Naive thymus-derived CD4-positive, alpha-beta T cell (primary cell): ENCODE measurements at regions of chr6 and their contacts with region 1.

Region 1: DNA sequence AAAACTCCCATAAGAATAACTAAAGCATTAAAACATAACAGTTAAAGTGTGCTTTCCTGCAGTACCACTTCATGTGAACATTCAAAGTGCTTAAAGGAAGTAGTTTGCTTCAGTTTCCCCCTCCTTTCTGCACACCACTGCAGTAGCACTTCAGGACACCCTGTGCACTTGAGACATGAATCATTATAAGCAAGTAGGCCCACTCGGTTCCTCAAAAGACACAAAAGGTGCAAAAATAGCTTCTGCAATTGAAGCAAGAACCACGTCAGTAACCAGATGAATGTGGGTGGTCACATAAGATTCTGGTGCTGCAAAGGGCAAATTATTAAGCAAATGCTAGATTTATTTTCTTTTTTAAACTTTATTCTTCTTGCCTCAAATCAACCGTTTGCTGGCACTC is 160.6 kb downstream of the HIVEP2 start:
- DNase-seq: peak in 6 of 9 donors; percentile 8 to 30 (median 23)
- ATAC-seq: peak; percentile 61
- H3K4me3 ChIP-seq: no peak overlapping the region
- H3K4me3 Mint-ChIP-seq: peak overlapping the region in 8 of 10 donors; percentile 0 to 53 (median 36)
- H3K27ac ChIP-seq: peak overlapping the region; percentile 54
- H3K27ac Mint-ChIP-seq: peak overlapping the region in 8 of 9 donors; percentile 17 to 86 (median 55)
- H3K4me1 ChIP-seq: peaks cover 0 to 17% of the 10 kb centered on the region in 2 donors
- H3K4me1 Mint-ChIP-seq: peaks cover 21 to 83% (median 79%) of the 10 kb centered on the region in 7 donors
- H3K27me3 ChIP-seq: no peaks in the 10 kb centered on the region
- H3K27me3 Mint-ChIP-seq: no peaks in the 10 kb centered on the region

Region 2: DNA sequence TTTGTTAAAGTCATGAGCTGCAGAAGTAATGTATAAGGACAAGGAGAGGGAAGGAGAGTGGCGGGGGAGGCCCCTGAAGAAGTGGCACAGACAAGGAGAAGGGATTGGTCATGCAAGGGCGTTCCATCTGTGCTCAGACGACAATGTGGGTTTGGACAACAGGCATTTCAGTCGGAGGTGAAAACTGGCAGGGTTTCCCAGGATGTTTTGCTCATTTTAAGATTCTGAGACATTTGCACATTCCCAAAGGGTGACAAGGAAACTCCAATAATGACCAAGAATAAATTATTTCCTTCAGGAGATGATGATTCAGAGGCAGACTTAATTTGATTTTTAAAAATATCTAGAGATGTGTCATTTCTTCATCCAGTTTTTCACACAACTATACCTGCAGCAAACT is 21.1 kb before region 1 on chr6:
- CTCF ChIA-PET with region 1: interaction called, 3 read pairs
- POLR2A ChIA-PET with region 1: interaction called, 3 read pairs
- intact Hi-C with region 1: loop called in 1 of 2 experiments (anchors 2 kb)
- DNase-seq: no peak
- ATAC-seq: no peak
- H3K4me3 ChIP-seq: no peak overlapping the region
- H3K4me3 Mint-ChIP-seq: no peak overlapping the region
- H3K27ac ChIP-seq: peak overlapping the region; percentile 23
- H3K27ac Mint-ChIP-seq: peak overlapping the region in 7 of 9 donors; percentile 58 to 87 (median 75)
- H3K4me1 ChIP-seq: peaks cover 4 to 6% of the 10 kb centered on the region in 2 donors
- H3K4me1 Mint-ChIP-seq: peaks cover 4 to 69% (median 51%) of the 10 kb centered on the region in 7 donors
- H3K27me3 ChIP-seq: no peaks in the 10 kb centered on the region
- H3K27me3 Mint-ChIP-seq: no peaks in the 10 kb centered on the region

Region 3: GRCh38 chr6:142773859-142774648 is 10.3 kb before region 1 on chr6:
- CTCF ChIA-PET with region 1: no interaction called
- POLR2A ChIA-PET with region 1: no interaction called
- intact Hi-C with region 1: loop called in 1 of 2 experiments (anchors 2 kb)
- DNase-seq: peak in 3 of 9 donors; percentile 17 to 28 (median 23)
- ATAC-seq: peak; percentile 50
- H3K4me3 ChIP-seq: no peak overlapping the region
- H3K4me3 Mint-ChIP-seq: peak overlapping the region; percentile 23 to 61 (median 49)
- H3K27ac ChIP-seq: peak overlapping the region; percentile 18
- H3K27ac Mint-ChIP-seq: peak overlapping the region; percentile 52 to 94 (median 80)
- H3K4me1 ChIP-seq: peaks cover 10 to 17% of the 10 kb centered on the region in 2 donors
- H3K4me1 Mint-ChIP-seq: peaks cover 14 to 75% (median 43%) of the 10 kb centered on the region in 7 donors
- H3K27me3 ChIP-seq: no peaks in the 10 kb centered on the region
- H3K27me3 Mint-ChIP-seq: no peaks in the 10 kb centered on the region

Region 4: DNA sequence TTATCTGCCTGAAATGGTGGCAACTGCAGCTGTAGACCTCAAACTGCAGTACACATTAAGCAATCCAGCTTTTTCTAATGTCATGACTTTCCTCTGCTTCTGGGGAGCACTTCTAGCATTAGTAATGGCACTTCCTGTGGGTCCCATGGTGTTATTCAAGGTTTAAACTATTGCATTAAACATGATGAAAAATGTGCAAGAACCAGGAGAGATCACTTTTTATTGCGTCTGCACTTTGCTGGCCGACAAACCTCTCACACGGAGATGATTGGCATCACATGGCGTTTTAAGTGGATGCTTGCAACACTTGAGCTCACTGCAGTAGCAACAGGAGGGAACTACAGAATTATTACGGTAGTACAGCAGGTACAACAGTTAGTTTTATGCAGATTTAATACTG is 12.2 kb after region 1 on chr6:
- CTCF ChIA-PET with region 1: no interaction called
- POLR2A ChIA-PET with region 1: interaction called, 3 read pairs
- intact Hi-C with region 1: loop called in 1 of 2 experiments (anchors 1 kb)
- DNase-seq: no peak
- ATAC-seq: peak; percentile 52
- H3K4me3 ChIP-seq: no peak overlapping the region
- H3K4me3 Mint-ChIP-seq: peak overlapping the region in 3 of 10 donors; percentile 1 to 30 (median 21)
- H3K27ac ChIP-seq: no peak overlapping the region
- H3K27ac Mint-ChIP-seq: peak overlapping the region in 8 of 9 donors; percentile 1 to 78 (median 54)
- H3K4me1 ChIP-seq: peaks cover 0 to 28% of the 10 kb centered on the region in 2 donors
- H3K4me1 Mint-ChIP-seq: peaks cover 24 to 90% (median 83%) of the 10 kb centered on the region in 7 donors
- H3K27me3 ChIP-seq: no peaks in the 10 kb centered on the region
- H3K27me3 Mint-ChIP-seq: no peaks in the 10 kb centered on the region

Region 5: GRCh38 chr6:142802124-142802523 is 17.8 kb after region 1 on chr6:
- CTCF ChIA-PET with region 1: interaction called, 3 read pairs
- POLR2A ChIA-PET with region 1: interaction called, 3 read pairs
- intact Hi-C with region 1: loop called in 1 of 2 experiments (anchors 2 kb)
- DNase-seq: peak in 1 of 9 donors; percentile 44
- ATAC-seq: no peak
- H3K4me3 ChIP-seq: no peak overlapping the region
- H3K4me3 Mint-ChIP-seq: peak overlapping the region in 2 of 10 donors; percentile 2 to 3
- H3K27ac ChIP-seq: no peak overlapping the region
- H3K27ac Mint-ChIP-seq: peak overlapping the region in 8 of 9 donors; percentile 8 to 82 (median 62)
- H3K4me1 ChIP-seq: peaks cover 0 to 45% of the 10 kb centered on the region in 2 donors
- H3K4me1 Mint-ChIP-seq: peaks cover 38 to 99% (median 95%) of the 10 kb centered on the region in 7 donors
- H3K27me3 ChIP-seq: no peaks in the 10 kb centered on the region
- H3K27me3 Mint-ChIP-seq: no peaks in the 10 kb centered on the region

Region 6: GRCh38 chr6:142810952-142811514 is 26.7 kb after region 1 on chr6:
- CTCF ChIA-PET with region 1: interaction called, 3 read pairs
- POLR2A ChIA-PET with region 1: no interaction called
- intact Hi-C with region 1: loop called in 1 of 2 experiments (anchors 5 kb)
- DNase-seq: peak in 4 of 9 donors; percentile 25 to 40 (median 32)
- ATAC-seq: peak; percentile 62
- H3K4me3 ChIP-seq: no peak overlapping the region
- H3K4me3 Mint-ChIP-seq: peak overlapping the region; percentile 39 to 72 (median 62)
- H3K27ac ChIP-seq: peak overlapping the region; percentile 17
- H3K27ac Mint-ChIP-seq: peak overlapping the region; percentile 14 to 81 (median 66)
- H3K4me1 ChIP-seq: peaks cover 23 to 39% of the 10 kb centered on the region in 2 donors
- H3K4me1 Mint-ChIP-seq: peaks cover 49 to 97% (median 90%) of the 10 kb centered on the region in 7 donors
- H3K27me3 ChIP-seq: no peaks in the 10 kb centered on the region
- H3K27me3 Mint-ChIP-seq: no peaks in the 10 kb centered on the region

Region 7: DNA sequence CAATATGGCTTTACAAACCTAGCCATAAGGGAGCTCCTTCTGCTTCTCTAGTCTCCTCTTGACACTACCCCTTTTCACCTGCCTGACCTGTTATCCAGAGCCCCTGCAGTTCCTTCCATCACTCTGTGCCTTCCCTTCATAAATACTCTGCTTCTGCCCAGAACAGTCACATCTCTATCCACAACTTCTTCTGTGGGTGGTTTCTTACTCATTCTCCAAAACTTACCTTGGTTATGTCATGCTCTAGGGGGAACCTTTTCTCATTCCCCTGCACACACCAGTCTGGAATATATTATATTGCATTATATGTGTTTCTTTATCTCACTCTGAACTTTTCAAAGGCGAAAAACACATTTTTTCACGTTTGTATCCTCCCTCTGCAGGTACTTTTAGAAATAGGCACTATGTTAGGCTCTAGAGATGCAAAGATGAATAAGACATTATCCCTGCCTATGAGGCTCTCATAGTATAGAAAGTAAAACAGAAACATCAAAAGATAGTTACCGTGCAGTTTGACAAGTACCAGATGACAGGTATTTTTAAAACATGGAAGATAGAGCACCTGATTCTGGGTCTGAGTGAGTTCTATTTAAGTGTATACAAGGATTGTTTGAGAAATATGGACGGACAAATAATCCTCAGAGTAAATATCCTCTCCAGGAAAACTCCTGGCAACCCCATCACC is 327.9 kb after region 1 on chr6:
- CTCF ChIA-PET with region 1: no interaction called
- POLR2A ChIA-PET with region 1: no interaction called
- intact Hi-C with region 1: no loop called
- DNase-seq: no peak
- ATAC-seq: no peak
- H3K4me3 ChIP-seq: no peak overlapping the region
- H3K4me3 Mint-ChIP-seq: no peak overlapping the region
- H3K27ac ChIP-seq: no peak overlapping the region
- H3K27ac Mint-ChIP-seq: no peak overlapping the region
- H3K4me1 ChIP-seq: no peaks in the 10 kb centered on the region
- H3K4me1 Mint-ChIP-seq: peaks cover 0 to 15% (median 0%) of the 10 kb centered on the region in 7 donors
- H3K27me3 ChIP-seq: no peaks in the 10 kb centered on the region
- H3K27me3 Mint-ChIP-seq: no peaks in the 10 kb centered on the region